ENCODE measurements at regions of chr6 and their contacts with region 1.

Region 1: DNA sequence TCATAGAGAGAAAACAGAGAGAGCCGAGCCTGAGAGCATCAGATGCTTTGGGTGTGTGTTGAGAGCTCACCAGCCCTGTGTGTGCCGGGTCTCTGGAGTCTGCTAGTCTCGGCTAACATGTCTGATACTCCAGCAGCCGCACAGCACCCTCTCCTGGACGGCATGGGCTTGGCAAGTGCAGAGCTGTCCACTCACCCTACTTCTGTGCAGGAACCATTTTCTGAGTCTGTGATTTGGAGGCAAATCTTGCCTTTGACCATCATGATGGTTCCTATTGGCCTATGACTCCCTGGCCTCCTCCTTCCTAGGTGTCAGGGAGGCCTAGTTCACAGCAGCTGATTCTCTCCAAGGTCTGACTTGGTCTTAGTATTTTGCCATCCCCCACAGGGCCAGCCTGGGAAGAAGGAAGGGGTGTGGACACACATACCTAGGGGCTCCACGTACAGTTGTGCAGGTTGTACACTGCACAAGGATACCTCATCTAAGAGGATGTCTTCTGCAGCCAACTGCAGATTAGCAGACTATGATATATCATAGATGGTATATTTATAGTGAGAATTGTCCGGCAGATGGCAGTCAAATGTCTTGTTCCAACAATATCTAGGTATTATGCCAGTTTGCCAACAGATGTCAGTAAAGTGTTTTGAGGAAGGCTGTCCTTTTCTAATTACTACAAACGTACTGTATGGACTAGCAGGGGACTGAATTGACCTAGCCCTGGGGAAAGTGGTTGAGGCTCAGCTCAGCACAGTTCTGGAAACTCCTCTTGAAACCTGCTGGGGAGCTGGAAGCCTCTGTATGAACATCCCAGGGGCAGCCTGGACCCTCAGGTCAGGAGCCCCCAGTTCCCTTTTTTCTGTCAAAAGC is 13.0 kb downstream of the FGD2 start:
- DNase-seq: peak; percentile 97
- H3K4me3 Mint-ChIP-seq: no peak overlapping the region
- H3K27ac Mint-ChIP-seq: peak overlapping the region; percentile 26
- H3K4me1 Mint-ChIP-seq: peaks cover 38% of the 10 kb centered on the region
- H3K27me3 Mint-ChIP-seq: no peaks in the 10 kb centered on the region

Region 2: GRCh38 chr6:36599791-36600209 is 418.6 kb before region 1 on chr6:
- CTCF ChIA-PET with region 1: no interaction called
- intact Hi-C with region 1: no loop called
- DNase-seq: peak; percentile 79
- H3K4me3 Mint-ChIP-seq: peak overlapping the region; percentile 92
- H3K27ac Mint-ChIP-seq: peak overlapping the region; percentile 82
- H3K4me1 Mint-ChIP-seq: peaks cover 71% of the 10 kb centered on the region
- H3K27me3 Mint-ChIP-seq: no peaks in the 10 kb centered on the region

Region 3: DNA sequence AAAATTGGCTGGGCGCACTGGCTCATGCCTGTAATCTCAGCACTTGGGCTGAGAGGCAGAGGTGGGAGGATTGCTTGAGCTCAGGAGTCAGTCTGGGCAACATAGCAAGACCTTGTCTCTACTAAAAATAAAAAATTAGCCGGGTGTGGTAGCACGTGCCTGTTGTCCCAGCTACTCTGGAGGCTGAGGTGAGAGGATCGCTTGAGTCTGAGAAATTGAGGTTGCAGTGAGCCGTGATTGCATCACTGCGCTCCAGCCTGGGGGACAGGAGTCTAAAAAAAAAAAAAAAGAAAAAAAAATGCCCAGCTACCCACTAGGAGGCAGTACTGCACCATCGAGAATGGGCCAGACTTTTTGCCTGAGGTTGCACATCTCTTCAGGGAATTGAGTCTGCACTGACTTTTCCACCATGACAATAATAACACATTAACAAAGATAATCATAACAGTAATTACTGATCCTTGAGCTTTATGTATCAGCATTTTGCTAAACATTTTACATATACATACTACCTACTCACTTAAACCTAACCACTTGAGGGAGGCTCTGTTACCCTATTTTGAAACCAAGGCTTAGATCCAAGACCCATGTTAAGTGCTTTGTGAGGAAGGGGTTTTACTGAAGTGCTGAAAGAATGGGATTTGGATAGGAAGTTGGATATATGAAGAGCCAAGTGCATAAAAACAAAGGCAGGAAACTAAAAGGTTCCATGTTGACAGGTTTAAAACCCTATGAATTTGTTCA is 403.2 kb before region 1 on chr6:
- CTCF ChIA-PET with region 1: interaction called, 3 read pairs
- intact Hi-C with region 1: loop called (anchors 10 kb)
- DNase-seq: peak; percentile 64
- H3K4me3 Mint-ChIP-seq: no peak overlapping the region
- H3K27ac Mint-ChIP-seq: peak overlapping the region; percentile 79
- H3K4me1 Mint-ChIP-seq: peaks cover 20% of the 10 kb centered on the region
- H3K27me3 Mint-ChIP-seq: no peaks in the 10 kb centered on the region

Region 4: GRCh38 chr6:36844232-36845170 is 173.9 kb before region 1 on chr6:
- CTCF ChIA-PET with region 1: no interaction called
- intact Hi-C with region 1: no loop called
- DNase-seq: no peak
- H3K4me3 Mint-ChIP-seq: no peak overlapping the region
- H3K27ac Mint-ChIP-seq: no peak overlapping the region
- H3K4me1 Mint-ChIP-seq: peaks cover 9% of the 10 kb centered on the region
- H3K27me3 Mint-ChIP-seq: peaks cover 13% of the 10 kb centered on the region

Region 5: DNA sequence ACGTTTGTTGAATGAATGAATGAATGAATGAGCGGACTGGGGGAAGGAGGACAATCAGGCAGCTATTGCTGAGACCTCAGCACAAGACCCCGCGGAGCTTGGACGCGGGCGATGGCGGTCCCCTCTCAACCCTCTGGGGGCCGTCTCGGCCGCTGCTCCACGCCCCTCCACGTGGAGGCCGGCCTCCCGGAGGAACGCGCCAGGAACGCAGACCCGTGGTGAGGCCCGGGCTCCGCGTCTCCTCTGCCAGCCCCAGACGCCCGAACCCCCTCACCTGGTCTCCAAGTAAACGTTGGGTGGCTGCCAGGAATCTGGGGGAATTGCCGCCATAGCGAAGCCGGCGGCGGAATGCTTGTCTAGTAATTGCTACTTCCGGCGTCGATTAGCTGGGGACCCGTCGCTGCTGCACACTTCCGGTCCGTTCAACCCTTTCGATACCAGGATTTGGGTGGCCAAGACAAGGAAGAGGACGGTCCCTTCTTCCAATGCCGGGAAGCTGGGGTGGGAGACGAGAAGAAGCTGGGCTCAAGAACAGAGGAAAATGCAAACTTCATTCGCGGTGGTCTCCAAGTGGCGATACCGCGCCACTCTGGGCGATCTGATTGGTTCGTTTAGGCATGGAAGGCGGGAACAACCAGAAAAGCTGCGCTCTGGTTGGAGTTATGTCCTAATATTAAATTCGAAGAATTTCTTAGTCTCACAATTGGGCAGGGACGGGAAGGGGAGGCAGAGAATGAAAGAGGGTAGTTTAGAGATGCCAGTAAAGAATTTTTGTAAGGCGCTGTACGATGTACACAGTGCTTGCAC is 143.8 kb before region 1 on chr6 and contains the start of gene PPIL1:
- CTCF ChIA-PET with region 1: interaction called, 82 read pairs
- intact Hi-C with region 1: no loop called
- DNase-seq: peak; percentile 88
- H3K4me3 Mint-ChIP-seq: peak within 1 kb of the TSS; percentile 94
- H3K27ac Mint-ChIP-seq: peak within 1 kb of the TSS; percentile 98
- H3K4me1 Mint-ChIP-seq: peaks cover 39% of the 10 kb centered on the region
- H3K27me3 Mint-ChIP-seq: peaks cover 8% of the 10 kb centered on the region
- total RNA-seq, gene PPIL1: 42.8 to 44.0 TPM

Region 6: GRCh38 chr6:36985808-36986703 is 32.4 kb before region 1 on chr6 and contains the start of gene MTCH1:
- CTCF ChIA-PET with region 1: interaction called, 13 read pairs
- intact Hi-C with region 1: loop called (anchors 1 kb)
- DNase-seq: peak; percentile 85
- H3K4me3 Mint-ChIP-seq: peak within 1 kb of the TSS; percentile 97
- H3K27ac Mint-ChIP-seq: peak within 1 kb of the TSS; percentile 91
- H3K4me1 Mint-ChIP-seq: peaks cover 19% of the 10 kb centered on the region
- H3K27me3 Mint-ChIP-seq: no peaks in the 10 kb centered on the region
- total RNA-seq, gene MTCH1: 97.4 to 101 TPM

Region 7: DNA sequence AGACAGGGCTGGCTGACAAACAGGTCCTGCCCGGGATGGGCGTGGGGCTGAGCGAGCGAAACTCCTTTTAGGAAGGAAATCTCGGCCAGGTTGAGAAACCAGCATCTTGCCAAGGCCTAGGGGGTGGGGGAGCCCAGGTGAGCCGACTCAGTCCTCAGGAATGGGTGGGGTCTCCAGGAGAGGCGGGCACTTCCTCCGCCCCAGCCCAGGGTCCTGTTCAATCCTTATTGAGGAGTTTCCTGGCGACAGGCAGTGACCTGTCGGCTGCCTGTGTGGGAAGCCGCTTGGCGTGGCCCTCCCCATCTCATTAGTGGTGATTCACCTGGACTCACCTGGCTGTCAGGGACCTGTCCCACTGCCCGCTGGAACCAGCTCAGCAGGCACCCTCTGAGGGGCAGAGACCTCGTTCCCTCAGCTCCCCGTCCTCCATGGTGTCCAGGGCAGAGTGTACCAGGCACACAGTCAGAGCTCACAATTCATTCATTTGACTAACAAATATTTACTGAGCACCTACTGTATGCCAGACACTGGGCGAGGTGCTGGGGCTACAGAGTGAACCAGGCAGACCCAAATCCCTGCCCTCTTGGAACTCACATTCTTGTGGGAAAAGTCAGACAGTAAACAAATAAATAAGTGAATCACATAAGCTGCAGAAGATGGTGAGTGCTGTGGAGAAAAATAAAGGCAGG is 38.2 kb after region 1 on chr6:
- CTCF ChIA-PET with region 1: interaction called, 161 read pairs
- intact Hi-C with region 1: loop called (anchors 1 kb)
- DNase-seq: no peak
- H3K4me3 Mint-ChIP-seq: no peak overlapping the region
- H3K27ac Mint-ChIP-seq: no peak overlapping the region
- H3K4me1 Mint-ChIP-seq: peaks cover 9% of the 10 kb centered on the region
- H3K27me3 Mint-ChIP-seq: no peaks in the 10 kb centered on the region

Region 8: GRCh38 chr6:37314487-37315156 is 296.2 kb after region 1 on chr6:
- CTCF ChIA-PET with region 1: interaction called, 16 read pairs
- intact Hi-C with region 1: loop called (anchors 1 kb)
- DNase-seq: peak; percentile 68
- H3K4me3 Mint-ChIP-seq: no peak overlapping the region
- H3K27ac Mint-ChIP-seq: no peak overlapping the region
- H3K4me1 Mint-ChIP-seq: peaks cover 2% of the 10 kb centered on the region
- H3K27me3 Mint-ChIP-seq: no peaks in the 10 kb centered on the region

Region 9: DNA sequence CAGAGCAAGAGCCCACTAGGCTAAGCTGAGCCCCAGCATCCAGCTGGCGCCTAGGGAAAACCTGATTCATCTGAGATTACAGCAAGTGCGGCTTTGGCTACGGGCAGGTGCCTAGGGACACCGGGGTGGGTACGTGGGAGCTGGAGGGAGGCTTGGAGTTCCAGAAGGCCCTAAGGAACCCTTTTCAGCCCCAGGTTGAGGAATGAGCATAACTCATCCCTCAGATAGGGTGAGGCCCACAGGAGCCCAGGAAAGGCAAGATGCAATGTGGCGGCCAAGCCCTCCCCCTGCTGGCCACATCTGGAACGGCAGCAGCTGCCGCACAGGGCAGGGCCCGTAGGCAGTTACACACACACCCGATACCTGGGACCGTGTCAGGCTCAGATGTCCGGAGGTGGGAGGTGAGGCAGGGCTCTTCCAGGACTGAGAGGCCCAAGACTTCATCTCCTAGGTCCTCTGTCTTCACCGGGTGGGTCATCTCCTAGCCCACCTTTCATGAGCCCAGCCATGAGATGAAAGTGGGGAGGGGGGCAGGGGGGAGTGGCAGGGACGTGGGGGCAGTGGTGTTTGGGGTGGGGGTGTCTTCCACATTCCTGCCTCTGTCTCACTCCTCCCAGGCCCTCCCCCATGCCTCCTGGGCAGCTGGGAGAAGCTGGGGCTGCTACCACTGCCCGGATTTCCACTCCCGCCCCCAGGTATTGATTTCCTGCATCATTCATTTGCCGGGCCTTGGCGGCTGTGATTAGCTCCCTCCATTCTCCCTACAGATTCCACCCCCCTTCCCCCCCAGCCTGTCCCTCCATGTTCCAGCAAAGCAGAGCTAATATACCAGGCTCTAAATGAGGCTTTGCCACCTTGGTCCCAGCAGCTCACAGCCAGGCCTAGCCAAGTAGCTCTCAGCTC is 673.7 kb after region 1 on chr6:
- CTCF ChIA-PET with region 1: no interaction called
- intact Hi-C with region 1: loop called (anchors 1 kb)
- DNase-seq: peak; percentile 87
- H3K4me3 Mint-ChIP-seq: no peak overlapping the region
- H3K27ac Mint-ChIP-seq: no peak overlapping the region
- H3K4me1 Mint-ChIP-seq: peaks cover 21% of the 10 kb centered on the region
- H3K27me3 Mint-ChIP-seq: peaks cover 12% of the 10 kb centered on the region

Measured in activated naive CD4-positive, alpha-beta T cell treated with anti-CD3 and anti-CD28 coated beads for 36 hours (primary cell).